Activated CD8-positive, alpha-beta T cell treated with anti-CD3 and anti-CD28 coated beads, Interleukin-2, amount 10 ng/mL, durations not matched to agents 7 days and 5 days (primary cell): ENCODE measurements at regions of chr22 and their contacts with region 1.

Region 1: DNA sequence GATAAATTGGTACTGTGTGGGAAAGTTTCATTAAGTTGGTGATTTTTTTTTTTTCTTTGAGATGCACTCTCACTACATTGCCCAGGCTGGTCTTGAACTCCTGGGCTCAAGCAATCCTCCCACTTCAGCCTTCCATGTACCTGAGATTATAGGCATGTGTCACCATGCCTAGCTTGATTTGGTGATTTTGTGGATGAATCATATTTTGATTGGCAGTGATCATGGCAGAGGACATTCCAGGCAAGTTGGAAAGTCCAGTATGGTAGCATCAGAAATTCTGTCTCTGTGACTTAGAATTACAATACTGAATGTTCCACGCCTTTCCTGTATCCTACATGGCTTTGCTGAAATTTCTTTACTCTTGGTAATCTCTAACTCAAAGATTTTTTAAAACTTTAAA is 49.4 kb downstream of the HORMAD2 start:
- DNase-seq: no peak
- ATAC-seq: no peak
- H3K4me3 Mint-ChIP-seq: no peak overlapping the region
- H3K27ac Mint-ChIP-seq: no peak overlapping the region
- H3K4me1 Mint-ChIP-seq: peaks cover 18% of the 10 kb centered on the region
- H3K27me3 Mint-ChIP-seq: no peaks in the 10 kb centered on the region

Region 2: GRCh38 chr22:30143265-30143664 is 13.6 kb after region 1 on chr22:
- CTCF ChIA-PET with region 1: interaction called, 11 read pairs
- POLR2A ChIA-PET with region 1: no interaction called
- DNase-seq: no peak
- ATAC-seq: no peak
- H3K4me3 Mint-ChIP-seq: no peak overlapping the region
- H3K27ac Mint-ChIP-seq: no peak overlapping the region
- H3K4me1 Mint-ChIP-seq: no peaks in the 10 kb centered on the region
- H3K27me3 Mint-ChIP-seq: no peaks in the 10 kb centered on the region